Endothelial cell of umbilical vein (primary cell): ENCODE measurements at regions of chr1 and their contacts with region 1.

Region 1: DNA sequence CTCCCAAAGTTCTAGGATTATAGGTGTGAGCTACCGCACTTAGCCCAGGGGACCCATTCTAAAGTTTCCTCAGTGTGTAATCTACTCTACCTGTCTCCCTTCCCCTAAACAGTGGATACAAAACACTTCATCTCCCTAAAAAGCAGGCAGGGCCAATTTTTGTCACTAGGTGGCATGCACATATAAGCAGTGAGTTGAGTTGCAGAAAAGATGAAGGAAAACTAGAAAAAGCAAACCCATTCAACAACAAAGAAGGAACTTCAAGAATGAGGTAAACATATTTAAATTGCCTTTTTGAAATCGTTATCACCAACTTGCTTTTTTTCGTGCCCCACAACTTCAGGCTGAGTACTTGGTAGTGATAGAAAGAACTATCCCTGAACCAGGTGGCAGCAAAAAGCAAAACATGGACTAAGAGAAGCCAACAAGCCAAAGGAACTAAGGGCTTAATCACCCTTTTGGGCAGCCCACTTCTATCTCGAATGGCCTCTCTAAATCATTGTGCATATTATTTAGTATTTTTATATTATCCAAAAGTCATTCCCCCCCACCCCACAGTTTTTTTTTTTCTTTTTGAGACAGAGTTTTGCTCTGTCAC is 19.7 kb upstream of the ALDH9A1 start:
- DNase-seq: peak; percentile 68
- H3K4me3 ChIP-seq: no peak overlapping the region
- H3K27ac ChIP-seq: no peak overlapping the region
- H3K4me1 ChIP-seq: no peaks in the 10 kb centered on the region
- H3K27me3 ChIP-seq: no peaks in the 10 kb centered on the region
- CTCF ChIP-seq: peak; percentile 52 to 70
- POLR2A ChIP-seq: no peak

Region 2: DNA sequence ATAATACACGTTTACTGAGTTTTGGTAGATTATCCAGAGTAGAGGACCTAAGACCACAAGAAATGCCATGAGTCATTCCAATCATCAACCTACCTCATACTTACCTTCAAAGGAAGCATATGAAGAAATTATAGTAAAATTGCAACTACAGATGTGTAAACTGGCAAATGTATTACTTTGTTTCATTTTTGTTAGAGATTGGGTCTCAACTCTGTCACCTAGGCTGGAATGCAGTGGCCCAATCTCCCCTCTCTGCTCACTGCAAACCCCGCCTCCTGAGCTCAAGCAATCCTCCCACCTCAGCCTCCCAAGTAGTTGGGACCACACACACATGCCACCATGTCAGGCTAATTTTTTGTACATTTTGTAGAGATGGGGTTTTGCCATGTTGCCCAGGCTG is 45.4 kb after region 1 on chr1:
- CTCF ChIA-PET with region 1: no interaction called
- POLR2A ChIA-PET with region 1: no interaction called
- dilution Hi-C with region 1: no loop called
- intact Hi-C with region 1: no loop called
- DNase-seq: no peak
- H3K4me3 ChIP-seq: no peak overlapping the region
- H3K27ac ChIP-seq: no peak overlapping the region
- H3K4me1 ChIP-seq: peaks cover 5% of the 10 kb centered on the region
- H3K27me3 ChIP-seq: no peaks in the 10 kb centered on the region
- CTCF ChIP-seq: no peak
- POLR2A ChIP-seq: no peak

Region 3: DNA sequence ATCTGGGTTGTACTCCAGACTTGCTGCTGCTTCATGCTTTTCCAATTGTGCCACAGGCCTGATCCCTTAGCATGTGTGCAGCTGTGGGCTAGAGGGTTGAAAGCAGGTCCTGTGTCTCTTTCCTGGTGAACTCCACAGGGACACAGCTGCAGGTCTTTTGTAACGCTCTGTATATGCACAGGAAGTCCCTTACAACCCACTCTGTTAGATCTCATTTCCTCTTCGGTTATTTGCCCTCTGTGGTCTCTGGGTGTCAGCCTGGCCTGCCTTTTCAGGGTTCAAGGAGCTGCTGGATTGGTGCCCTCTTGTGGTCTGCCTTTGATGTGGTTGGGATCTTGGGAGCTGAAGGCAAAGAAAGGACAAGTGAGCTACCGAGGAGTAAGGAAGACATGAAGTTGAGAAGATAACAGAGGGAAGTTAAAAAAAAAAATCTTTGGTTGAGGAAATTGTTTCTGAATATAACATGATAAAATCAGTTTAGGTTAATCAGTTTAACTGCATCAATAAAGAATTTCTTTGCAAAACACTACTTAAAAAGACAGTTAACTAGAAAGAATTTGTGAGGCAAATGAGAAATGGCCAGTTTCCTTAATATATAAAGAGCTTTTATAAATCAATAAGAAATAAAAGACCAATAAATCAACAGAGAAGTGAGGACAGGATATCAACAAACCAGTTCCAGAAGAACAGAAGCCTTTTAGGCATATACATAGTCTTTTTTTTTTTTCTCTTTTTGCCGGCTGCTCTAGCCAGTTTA is 153.5 kb after region 1 on chr1:
- CTCF ChIA-PET with region 1: interaction called, 4 read pairs
- POLR2A ChIA-PET with region 1: no interaction called
- dilution Hi-C with region 1: no loop called
- intact Hi-C with region 1: loop called (anchors 1 kb)
- DNase-seq: peak; percentile 54
- H3K4me3 ChIP-seq: no peak overlapping the region
- H3K27ac ChIP-seq: peak overlapping the region; percentile 21
- H3K4me1 ChIP-seq: peaks cover 10% of the 10 kb centered on the region
- H3K27me3 ChIP-seq: no peaks in the 10 kb centered on the region
- CTCF ChIP-seq: peak; percentile 44 to 45
- POLR2A ChIP-seq: no peak

Region 4: DNA sequence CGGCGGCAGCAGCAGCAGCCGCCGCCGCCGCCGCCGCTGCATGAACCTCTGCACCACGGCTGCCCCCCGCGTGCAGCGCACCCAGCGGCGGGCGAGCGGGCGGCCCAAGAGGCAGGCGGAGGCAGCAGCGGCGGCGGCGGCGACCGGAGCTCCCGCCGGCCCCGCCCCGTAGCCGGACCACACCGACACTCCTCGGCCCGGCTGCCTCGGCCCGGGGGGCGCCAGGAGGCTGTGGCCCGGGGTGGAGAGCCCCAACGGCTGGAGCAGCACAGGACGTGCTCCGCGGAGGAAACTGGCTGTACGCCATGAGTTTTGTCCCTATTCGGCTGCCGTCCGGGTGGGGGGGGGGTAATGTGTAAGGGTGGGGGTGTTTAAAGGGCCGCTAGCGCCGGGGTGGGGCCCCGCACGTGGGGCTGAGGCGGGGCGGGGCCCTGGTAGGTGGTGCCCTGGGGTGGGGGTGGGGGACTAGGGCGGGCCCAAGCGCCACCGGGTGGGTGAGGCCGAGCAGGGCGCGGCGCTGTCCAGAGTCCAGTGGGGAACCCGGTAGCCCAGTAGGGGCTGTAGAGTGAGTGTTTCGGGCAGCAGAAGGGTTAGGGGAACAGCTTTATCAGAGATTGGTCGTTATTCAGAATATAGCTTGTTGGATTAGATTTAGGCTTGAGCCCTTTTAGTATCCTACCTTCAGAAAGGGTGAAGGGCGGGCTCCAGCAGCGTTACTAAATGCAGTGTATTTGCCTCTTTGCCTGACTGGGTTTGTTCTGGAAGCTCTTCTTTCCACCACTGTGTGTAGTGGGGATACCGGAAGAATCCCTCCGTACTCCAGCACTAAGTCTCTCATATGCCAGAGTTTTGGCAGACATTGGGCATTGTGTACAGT is 448.9 kb after region 1 on chr1 and contains the start of gene FAM78B:
- CTCF ChIA-PET with region 1: no interaction called
- POLR2A ChIA-PET with region 1: no interaction called
- dilution Hi-C with region 1: no loop called
- intact Hi-C with region 1: loop called (anchors 1 kb)
- DNase-seq: peak; percentile 31
- H3K4me3 ChIP-seq: peak within 1 kb of the TSS in 1 of 3 experiments; percentile 53
- H3K27ac ChIP-seq: no peak within 1 kb of the TSS
- H3K4me1 ChIP-seq: peaks cover 6% of the 10 kb centered on the region
- H3K27me3 ChIP-seq: peaks cover 17 to 21% of the 10 kb centered on the region in 2 experiments
- CTCF ChIP-seq: no peak
- POLR2A ChIP-seq: no peak
- total RNA-seq, gene FAM78B: not detected in 2 replicates

Region 5: DNA sequence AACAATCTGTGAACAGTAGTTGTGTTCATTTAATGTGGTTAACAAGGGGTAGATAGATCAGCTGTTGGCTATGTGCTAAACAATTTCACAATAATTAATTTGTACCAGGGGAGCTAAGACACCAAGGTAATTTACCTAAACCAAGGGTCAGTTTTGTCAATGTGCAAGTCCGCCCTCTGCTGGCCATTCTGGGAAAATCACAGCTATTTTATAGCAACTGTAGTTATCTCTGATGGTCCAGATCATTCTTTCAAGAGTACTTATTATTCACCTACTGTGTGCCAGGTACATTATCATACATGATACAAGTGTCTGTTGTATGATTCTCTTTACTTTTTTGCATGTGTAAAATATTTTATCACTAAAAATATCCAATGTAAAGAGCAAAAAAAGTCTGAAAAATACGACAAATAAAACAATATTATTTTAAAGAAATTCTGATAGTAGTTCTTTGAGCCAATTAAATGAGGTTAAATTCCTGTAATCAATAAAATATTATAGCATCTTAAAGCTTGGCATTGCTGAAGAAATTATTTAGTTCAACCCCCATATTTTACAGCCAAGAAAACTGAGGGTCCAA is 761.1 kb after region 1 on chr1:
- CTCF ChIA-PET with region 1: interaction called, 6 read pairs
- POLR2A ChIA-PET with region 1: no interaction called
- dilution Hi-C with region 1: no loop called
- intact Hi-C with region 1: loop called (anchors 1 kb)
- DNase-seq: peak; percentile 53
- H3K4me3 ChIP-seq: no peak overlapping the region
- H3K27ac ChIP-seq: no peak overlapping the region
- H3K4me1 ChIP-seq: no peaks in the 10 kb centered on the region
- H3K27me3 ChIP-seq: no peaks in the 10 kb centered on the region
- CTCF ChIP-seq: peak; percentile 53 to 59
- POLR2A ChIP-seq: no peak